ENCODE measurements at regions of chr6 and their contacts with region 1.

Region 1: DNA sequence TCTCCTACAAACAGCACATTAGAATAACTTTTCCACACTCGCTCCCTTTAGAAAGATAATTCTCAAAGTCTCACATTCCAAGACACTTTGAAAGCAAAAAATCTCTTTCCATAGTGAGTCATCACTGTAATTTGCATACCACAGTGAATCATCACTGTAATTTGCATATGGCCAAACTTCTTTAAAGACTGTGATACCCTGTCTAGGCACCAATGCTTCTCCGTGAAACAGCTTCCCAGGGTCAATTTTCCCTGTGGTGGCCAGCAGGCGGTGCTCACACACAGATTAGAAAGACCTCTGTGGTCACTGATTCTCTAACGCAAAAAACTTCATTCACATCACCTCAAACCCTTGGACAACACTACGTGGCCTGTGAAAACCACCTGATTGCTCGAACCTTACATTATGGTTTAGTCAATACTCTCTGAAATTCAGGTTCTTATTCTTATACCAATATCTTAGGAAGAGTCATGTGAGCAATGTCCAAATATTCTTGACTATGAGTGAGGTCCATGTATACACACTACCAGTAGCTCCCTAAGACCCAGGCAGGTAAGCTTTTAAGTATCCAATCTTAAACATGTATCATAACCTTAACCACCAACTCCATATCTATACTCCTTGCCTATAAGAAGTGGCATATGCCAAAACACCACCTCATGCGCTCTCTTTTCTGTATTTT is 78.5 kb upstream of the PHACTR1 start:
- DNase-seq: peak in 2 of 9 experiments; percentile 8 to 36
- ATAC-seq: no peak
- H3K4me3 ChIP-seq: no peak overlapping the region
- H3K4me3 Mint-ChIP-seq: no peak overlapping the region
- H3K27ac ChIP-seq: no peak overlapping the region
- H3K27ac Mint-ChIP-seq: no peak overlapping the region
- H3K4me1 ChIP-seq: no peaks in the 10 kb centered on the region
- H3K4me1 Mint-ChIP-seq: no peaks in the 10 kb centered on the region
- H3K27me3 ChIP-seq: no peaks in the 10 kb centered on the region
- H3K27me3 Mint-ChIP-seq: peaks cover 22% of the 10 kb centered on the region
- CTCF ChIP-seq: peak; percentile 27

Region 2: GRCh38 chr6:12648171-12648570 is 10.1 kb after region 1 on chr6:
- CTCF ChIA-PET with region 1: no interaction called
- POLR2A ChIA-PET with region 1: no interaction called
- intact Hi-C with region 1: loop called in 1 of 2 experiments (anchors 1 kb)
- DNase-seq: no peak
- ATAC-seq: no peak
- H3K4me3 ChIP-seq: no peak overlapping the region
- H3K4me3 Mint-ChIP-seq: no peak overlapping the region
- H3K27ac ChIP-seq: no peak overlapping the region
- H3K27ac Mint-ChIP-seq: no peak overlapping the region
- H3K4me1 ChIP-seq: no peaks in the 10 kb centered on the region
- H3K4me1 Mint-ChIP-seq: no peaks in the 10 kb centered on the region
- H3K27me3 ChIP-seq: no peaks in the 10 kb centered on the region
- H3K27me3 Mint-ChIP-seq: peaks cover 2% of the 10 kb centered on the region
- CTCF ChIP-seq: no peak

Region 3: DNA sequence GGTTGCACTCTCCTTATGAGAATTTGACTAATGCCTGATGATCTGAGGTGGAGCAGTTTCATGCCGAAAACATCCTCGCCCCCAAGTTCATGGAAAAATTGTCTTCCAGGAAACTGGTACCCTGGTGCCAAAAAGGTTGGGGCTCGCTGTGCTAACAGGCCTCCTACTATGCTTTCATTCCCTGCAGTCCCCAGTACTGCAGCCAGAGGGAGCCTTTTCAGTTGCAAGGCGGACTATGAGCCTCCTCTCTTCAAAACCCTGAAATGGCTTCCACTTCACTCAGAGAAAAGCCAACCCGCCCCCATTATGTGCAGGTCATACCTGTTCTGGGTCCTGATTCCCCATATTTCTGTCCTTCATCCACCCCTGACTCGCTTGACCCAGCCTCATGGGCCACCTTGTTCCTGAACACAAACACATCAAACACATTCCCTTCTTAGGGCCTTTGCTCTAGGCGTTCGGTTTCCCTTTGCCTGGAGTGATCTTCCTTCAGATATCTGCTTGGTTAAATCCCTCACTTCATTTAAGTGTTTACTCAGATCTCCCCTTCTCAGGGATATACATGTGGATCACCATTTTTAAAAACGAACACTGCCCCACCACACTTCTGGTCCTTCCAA is 252.2 kb after region 1 on chr6:
- CTCF ChIA-PET with region 1: no interaction called
- POLR2A ChIA-PET with region 1: no interaction called
- intact Hi-C with region 1: loop called (anchors 5 to 10 kb)
- DNase-seq: peak in 2 of 9 experiments; percentile 12 to 14
- ATAC-seq: no peak
- H3K4me3 ChIP-seq: no peak overlapping the region
- H3K4me3 Mint-ChIP-seq: no peak overlapping the region
- H3K27ac ChIP-seq: no peak overlapping the region
- H3K27ac Mint-ChIP-seq: no peak overlapping the region
- H3K4me1 ChIP-seq: no peaks in the 10 kb centered on the region
- H3K4me1 Mint-ChIP-seq: peaks cover 3% of the 10 kb centered on the region
- H3K27me3 ChIP-seq: no peaks in the 10 kb centered on the region
- H3K27me3 Mint-ChIP-seq: peaks cover 11% of the 10 kb centered on the region
- CTCF ChIP-seq: peak; percentile 14

Measured in CD8-positive, alpha-beta T cell (primary cell).